Activated CD4-positive, alpha-beta memory T cell treated with anti-CD3 and anti-CD28 coated beads for 36 hours (primary cell): ENCODE measurements at regions of chr6 and their contacts with region 1.

Region 1: DNA sequence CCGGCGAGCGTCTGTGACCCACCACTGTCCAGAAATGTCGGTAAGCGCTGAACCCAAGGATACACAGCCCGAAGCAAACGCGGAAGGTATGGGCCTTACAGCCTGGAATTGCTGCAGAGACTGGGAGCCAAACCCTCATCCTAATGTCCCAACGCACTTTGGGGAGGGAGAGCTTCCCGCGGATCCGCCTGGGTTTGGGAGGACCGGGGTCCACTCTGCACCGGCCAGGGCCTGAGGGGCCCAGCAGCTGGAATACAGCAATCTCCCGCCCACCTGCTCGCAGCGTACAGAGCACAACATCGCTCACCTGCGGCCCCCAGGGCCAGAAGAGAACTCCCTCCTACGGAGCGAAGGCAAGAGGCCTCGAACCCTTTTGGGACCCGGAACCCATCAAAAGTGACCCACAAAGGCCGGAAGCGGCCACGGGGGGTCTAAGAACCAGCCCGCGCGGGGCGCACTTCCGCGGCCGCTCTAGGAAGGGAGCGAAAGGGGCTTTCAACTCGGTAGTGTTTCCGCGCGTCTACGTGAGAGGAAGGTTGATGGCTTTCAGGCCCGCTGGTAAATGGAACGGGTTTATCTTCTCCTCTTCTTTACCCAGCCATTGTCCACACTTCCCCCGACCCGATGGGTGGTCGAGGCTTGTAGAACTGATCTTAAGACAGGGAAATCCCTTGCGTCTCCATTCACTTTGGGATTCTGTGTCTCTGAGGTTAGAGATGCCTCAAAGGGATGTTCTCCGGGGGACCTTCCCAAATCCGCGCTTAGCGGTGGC is at the start of gene ZSCAN12:
- DNase-seq: peak; percentile 90
- H3K4me3 Mint-ChIP-seq: peak within 1 kb of the TSS; percentile 85
- H3K27ac Mint-ChIP-seq: peak within 1 kb of the TSS; percentile 84
- H3K4me1 Mint-ChIP-seq: peaks cover 30% of the 10 kb centered on the region
- H3K27me3 Mint-ChIP-seq: peaks cover 24% of the 10 kb centered on the region
- total RNA-seq, gene ZSCAN12: 4.1 to 4.4 TPM

Region 2: DNA sequence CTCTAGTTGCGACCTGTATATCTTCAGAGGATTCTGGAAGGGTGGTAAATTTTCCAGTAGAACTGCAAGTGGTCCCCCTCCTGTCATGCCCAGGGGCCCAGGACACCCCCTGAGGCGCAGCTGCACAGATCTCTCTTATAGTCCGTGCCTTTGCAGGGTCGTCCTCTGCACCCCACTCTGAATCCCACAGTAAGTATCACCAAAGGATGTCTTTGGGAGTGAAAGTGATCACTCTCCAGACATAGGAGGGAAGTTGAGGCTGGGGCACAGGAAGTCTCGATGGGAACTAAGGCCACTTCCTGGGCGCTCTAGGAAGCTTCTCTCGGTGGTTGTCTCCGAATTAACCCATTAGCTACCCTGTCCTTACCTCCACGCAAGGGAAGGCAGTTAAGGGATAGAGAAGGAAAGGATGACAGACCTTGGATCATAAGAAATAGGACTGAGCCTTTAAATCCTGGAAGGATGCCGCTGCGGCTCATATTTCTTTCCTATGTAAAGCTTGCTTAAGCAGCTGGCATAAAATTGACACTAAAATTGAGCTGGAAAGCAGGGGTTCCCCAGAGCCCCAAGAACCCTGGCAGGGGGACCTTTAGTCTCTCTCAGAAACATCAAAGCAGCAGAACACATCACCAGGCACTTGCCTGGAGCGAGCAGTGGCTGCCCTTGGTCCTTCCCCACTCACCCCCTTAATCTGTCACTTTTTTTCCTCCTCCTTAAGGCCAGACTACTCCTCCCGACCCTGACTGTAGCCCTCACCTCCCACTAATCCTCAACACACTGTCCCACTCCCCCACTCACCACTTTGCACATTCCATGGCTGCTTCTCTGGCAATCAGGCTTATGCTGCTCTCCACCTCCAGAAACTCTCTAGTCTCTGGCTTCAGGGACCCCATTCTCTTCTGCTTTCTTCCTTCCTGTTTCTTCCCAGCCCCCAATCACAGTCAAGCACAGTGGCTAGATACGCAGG is 147.2 kb before region 1 on chr6 and contains the start of gene ZKSCAN4:
- CTCF ChIA-PET with region 1: no interaction called
- POLR2A ChIA-PET with region 1: no interaction called
- intact Hi-C with region 1: loop called (anchors 1 kb)
- DNase-seq: peak; percentile 84
- H3K4me3 Mint-ChIP-seq: peak within 1 kb of the TSS; percentile 98
- H3K27ac Mint-ChIP-seq: peak within 1 kb of the TSS; percentile 73
- H3K4me1 Mint-ChIP-seq: peaks cover 17% of the 10 kb centered on the region
- H3K27me3 Mint-ChIP-seq: no peaks in the 10 kb centered on the region
- total RNA-seq, gene ZKSCAN4: 3.7 to 3.8 TPM

Region 3: DNA sequence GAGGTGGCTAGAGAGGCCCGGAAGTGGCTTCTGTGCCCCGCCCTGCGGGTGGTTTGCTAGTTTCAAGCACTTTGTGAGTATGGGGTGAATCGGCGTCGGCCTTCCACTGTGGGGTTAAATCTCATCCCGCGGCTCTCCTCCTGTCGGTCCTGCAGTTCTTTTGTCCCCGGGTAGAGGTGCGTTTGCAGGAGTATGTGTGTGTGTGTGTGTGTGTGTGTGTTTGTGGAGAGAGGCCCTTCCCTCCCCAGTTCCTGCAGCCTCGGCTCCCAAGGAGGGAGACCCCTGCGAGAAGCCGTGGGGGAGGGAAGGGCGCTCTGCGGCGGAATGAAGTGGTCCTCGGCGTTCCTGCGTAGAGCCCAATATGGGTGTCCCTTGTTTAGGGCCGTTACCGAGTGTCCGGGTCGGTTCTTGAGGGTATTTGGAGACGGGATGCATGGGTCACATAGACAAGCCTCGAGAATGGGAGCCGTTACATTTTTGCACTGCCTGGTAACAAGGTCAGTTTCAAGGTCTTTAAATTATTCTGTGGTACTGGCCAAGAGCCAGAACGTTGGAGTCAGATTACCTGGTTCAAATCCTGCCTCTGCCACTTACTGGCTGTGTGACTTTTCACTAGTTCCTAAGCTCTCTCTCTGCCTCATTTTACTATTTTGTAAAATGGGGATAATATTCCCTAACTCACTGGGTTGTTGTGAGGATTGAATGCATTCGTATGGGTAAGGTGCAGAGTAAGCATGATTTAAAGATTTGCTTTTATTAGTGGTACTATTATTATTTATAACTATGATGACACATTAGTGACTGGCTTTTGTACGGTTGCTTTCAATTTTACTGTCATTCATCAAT is 49.4 kb before region 1 on chr6 and contains the start of gene ZKSCAN3:
- CTCF ChIA-PET with region 1: no interaction called
- POLR2A ChIA-PET with region 1: no interaction called
- intact Hi-C with region 1: loop called (anchors 1 kb)
- DNase-seq: peak; percentile 94
- H3K4me3 Mint-ChIP-seq: peak within 1 kb of the TSS; percentile 100
- H3K27ac Mint-ChIP-seq: peak within 1 kb of the TSS; percentile 93
- H3K4me1 Mint-ChIP-seq: peaks cover 20% of the 10 kb centered on the region
- H3K27me3 Mint-ChIP-seq: peaks cover 6% of the 10 kb centered on the region
- total RNA-seq, gene ZKSCAN3: 2.2 to 2.7 TPM

Region 4: DNA sequence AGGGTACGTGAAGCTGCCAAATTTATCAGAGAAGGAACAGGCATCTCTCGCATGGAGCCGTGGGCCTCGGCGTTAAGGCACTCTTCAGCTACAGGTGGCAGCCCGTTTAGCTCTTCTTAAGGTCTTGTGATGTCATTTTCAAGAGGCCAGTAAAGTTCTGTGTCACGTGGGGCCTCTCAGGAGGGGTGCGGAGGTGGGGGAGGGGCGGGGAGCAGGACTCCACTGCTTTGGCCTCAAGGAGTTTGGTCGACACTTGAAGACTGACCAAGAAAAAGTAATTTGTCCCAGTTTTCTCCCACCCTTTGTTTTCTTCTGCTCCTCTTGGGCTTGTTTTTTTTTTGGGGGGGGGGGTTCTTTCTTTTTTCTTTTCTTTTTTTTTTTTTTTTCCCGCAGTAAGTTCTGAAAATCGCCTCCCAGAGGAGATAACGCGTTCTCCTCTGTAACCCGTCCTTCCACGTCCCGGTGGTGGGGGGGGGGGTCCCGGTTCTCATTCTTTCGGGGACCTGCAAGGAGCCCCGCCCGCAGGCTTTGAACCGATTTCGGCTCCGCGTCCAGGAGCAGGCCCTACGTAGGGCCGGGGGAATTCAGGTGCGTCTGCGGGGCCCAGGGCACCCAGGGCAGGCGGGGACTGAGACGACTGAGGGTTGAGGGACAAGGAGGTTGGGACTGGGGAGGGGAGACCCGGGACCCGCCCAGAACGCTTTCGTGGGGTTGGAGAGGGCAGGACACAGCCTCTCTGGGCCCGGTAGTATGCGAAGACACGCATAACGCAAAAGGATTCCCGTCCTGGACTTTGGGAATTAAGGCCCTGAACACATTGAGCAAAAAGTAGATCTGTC is 90.0 kb after region 1 on chr6:
- CTCF ChIA-PET with region 1: no interaction called
- POLR2A ChIA-PET with region 1: no interaction called
- intact Hi-C with region 1: loop called (anchors 5 kb)
- DNase-seq: peak; percentile 66
- H3K4me3 Mint-ChIP-seq: peak overlapping the region; percentile 56
- H3K27ac Mint-ChIP-seq: no peak overlapping the region
- H3K4me1 Mint-ChIP-seq: peaks cover 16% of the 10 kb centered on the region
- H3K27me3 Mint-ChIP-seq: peaks cover 63% of the 10 kb centered on the region

Region 5: GRCh38 chr6:28586962-28587745 is 187.6 kb after region 1 on chr6:
- CTCF ChIA-PET with region 1: no interaction called
- POLR2A ChIA-PET with region 1: no interaction called
- intact Hi-C with region 1: loop called (anchors 2 kb)
- DNase-seq: peak; percentile 77
- H3K4me3 Mint-ChIP-seq: peak overlapping the region; percentile 73
- H3K27ac Mint-ChIP-seq: no peak overlapping the region
- H3K4me1 Mint-ChIP-seq: peaks cover 20% of the 10 kb centered on the region
- H3K27me3 Mint-ChIP-seq: peaks cover 73% of the 10 kb centered on the region